ENCODE measurements at regions of chr10 and their contacts with region 1.

Region 1: DNA sequence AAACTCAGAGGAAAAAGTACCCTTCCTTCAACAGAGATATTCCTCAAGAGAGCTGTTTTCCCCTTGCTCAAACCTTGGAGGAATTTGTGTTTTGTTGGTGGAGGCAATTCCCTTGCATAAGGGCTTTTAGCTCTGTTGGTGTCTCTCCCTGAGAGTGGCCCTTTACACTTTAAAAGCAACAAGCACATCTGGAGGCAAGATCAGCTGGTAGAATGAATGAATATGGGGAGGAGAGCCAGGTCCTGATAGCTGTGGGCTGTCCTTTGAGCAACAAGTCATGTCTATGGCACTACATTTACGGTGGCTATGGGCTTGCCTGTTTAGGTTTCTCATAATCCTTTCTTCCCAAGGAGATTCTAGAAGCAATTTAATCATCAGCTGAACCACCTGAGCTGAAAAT is 384.0 kb downstream of the SORCS3 start:
- DNase-seq: no peak
- H3K4me3 Mint-ChIP-seq: no peak overlapping the region
- H3K27ac Mint-ChIP-seq: no peak overlapping the region
- H3K4me1 Mint-ChIP-seq: no peaks in the 10 kb centered on the region
- H3K27me3 Mint-ChIP-seq: peaks cover 1% of the 10 kb centered on the region

Region 2: GRCh38 chr10:106401161-106401560 is 1376.1 kb after region 1 on chr10:
- intact Hi-C with region 1: loop called (anchors 5 kb)
- DNase-seq: no peak
- H3K4me3 Mint-ChIP-seq: no peak overlapping the region
- H3K27ac Mint-ChIP-seq: no peak overlapping the region
- H3K4me1 Mint-ChIP-seq: no peaks in the 10 kb centered on the region
- H3K27me3 Mint-ChIP-seq: no peaks in the 10 kb centered on the region

Measured in activated T-helper 1 cell treated with anti-CD3 and anti-CD28 coated beads, Interleukin-12 subunit alpha, Interleukin-12 subunit beta, Interleukin-2, Interleukin-4 antibody, amounts not matched to agents 30 ng/mL and 10 ng/mL and 1 ng/mL, durations not matched to agents 14 hours and 24 hours and 36 hours (primary cell).